Head of caudate nucleus (tissue), 42 donors: ENCODE measurements at regions of chr11 and their contacts with region 1.

Region 1: DNA sequence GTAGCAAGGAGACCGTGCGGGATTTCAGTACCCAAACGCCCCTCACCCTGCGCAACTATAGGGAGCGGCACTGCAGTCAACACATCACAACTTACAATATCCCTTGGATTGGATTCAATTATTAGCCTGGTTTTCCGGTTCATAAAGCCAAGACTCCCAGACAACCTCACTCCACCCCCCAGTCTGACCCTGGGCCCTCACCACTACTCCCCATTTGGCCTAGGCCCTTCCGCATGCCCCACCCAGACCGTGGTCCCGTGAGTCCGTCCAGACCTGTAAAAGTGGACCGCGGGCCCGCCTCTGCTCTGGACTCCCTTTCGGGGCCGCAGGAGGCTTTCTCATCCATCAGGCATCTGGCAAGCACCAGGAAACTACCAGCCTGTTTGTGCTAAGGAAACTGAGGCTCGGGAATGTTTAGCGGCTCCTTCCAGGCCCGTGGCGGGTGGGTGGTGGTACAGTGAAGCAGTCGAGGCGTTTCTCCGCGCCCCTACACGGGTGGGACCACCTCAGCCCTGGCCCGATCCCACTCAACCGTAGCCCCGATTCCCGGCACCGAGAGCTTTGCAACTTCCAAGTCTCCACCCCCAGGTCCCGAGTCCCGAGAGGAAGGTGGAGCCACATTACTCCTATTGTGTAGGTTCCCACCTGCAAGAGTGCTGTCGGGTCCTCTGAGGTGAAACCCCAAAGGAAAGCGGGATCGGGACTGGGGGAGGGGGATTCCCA is 679 bp upstream of the DPP3 start:
- DNase-seq: peak in 20 of 42 donors; percentile 5 to 87 (median 53)

Region 2: DNA sequence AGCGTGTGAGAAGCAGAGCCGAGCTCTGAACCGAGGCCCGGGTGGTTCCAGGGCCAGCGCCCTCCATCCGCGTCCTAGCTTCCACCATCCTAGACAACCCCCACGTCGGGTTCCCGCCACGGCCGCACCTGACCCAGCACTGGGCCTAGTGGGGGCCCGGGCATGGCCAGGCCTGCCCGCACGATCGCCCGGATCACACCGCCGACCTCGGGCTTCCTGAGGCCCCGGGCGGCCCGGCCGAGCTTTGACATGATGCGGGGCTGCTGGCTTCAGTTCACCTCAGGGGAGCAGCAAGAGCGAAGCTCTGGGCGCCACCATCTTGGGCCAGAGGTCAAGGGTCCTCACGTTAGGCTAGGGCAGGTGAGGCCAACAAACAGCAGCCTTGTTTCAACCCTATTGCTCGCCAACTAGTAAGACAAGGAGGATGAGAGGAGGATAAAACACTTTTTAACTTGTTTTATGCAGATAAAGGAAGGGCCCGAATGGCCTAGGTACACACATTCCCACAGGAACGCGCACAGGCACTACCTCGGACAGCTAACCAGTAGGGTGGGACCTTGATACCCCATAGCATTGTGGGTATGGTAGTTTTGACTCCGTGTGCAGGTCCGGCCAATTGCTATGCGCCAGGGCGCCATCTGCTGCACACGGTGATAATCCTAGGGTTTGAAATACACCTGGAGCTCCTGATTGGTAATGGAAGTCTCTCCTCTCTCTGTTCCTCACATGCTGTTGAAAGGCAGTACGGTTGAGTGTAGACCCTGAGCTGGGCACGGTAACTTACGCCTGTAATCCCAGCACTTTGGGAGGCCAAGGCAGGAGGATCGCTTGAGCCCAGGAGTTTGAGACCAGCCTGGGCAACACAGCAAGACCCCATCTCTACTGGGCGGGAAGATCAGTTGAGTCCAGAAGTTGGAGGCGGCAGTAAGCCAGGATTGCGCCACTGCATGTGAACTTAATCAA is 40.8 kb before region 1 on chr11 and contains the start of gene MRPL11:
- intact Hi-C with region 1: loop called (anchors 5 kb)
- DNase-seq: peak; percentile 82 to 96 (median 91)